ENCODE measurements at regions of chr9 and their contacts with region 1.

Region 1: DNA sequence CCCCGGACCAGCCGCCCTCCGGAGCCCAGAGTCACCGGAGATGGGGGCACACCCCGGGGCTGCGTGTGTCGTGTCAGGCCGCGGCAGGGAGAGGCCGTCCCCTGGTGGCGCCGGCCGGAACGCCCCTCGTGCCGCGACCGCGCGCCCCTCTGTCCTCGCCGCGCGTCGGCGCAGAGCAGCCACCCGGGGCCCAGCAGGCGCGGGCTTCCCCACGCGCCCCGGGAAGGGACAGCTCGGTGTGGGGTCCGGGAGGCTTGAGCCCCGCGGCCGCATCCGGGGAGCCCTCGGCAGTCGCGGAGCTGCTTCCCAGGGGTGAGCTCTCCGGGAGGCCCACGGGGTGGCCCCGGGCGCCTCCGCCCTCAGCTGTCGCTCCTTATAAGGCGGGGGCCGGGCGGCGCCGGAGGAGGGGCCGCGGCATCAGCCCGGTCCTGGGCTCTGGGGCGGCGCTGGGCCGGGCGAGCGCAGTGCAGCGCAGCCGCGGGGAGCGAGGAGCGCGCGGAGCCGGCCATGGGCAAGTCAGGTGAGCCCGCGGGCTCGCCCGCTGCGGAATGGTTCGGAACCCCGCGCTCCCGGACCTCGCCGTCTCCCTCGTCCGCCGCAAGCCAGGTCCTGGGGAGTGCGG is at the start of gene GLIPR2:
- DNase-seq: peak; percentile 81
- H3K4me3 Mint-ChIP-seq: peak within 1 kb of the TSS; percentile 93
- H3K27ac Mint-ChIP-seq: peak within 1 kb of the TSS; percentile 83
- H3K4me1 Mint-ChIP-seq: peaks cover 50% of the 10 kb centered on the region
- H3K27me3 Mint-ChIP-seq: peaks cover 20% of the 10 kb centered on the region
- total RNA-seq, gene GLIPR2: 26.3 and 27.5 TPM in 2 replicates

Region 2: GRCh38 chr9:36102742-36103495 is 33.5 kb before region 1 on chr9:
- intact Hi-C with region 1: loop called (anchors 1 kb)
- DNase-seq: peak; percentile 75
- H3K4me3 Mint-ChIP-seq: no peak overlapping the region
- H3K27ac Mint-ChIP-seq: no peak overlapping the region
- H3K4me1 Mint-ChIP-seq: peaks cover 8% of the 10 kb centered on the region
- H3K27me3 Mint-ChIP-seq: peaks cover 2% of the 10 kb centered on the region

Region 3: DNA sequence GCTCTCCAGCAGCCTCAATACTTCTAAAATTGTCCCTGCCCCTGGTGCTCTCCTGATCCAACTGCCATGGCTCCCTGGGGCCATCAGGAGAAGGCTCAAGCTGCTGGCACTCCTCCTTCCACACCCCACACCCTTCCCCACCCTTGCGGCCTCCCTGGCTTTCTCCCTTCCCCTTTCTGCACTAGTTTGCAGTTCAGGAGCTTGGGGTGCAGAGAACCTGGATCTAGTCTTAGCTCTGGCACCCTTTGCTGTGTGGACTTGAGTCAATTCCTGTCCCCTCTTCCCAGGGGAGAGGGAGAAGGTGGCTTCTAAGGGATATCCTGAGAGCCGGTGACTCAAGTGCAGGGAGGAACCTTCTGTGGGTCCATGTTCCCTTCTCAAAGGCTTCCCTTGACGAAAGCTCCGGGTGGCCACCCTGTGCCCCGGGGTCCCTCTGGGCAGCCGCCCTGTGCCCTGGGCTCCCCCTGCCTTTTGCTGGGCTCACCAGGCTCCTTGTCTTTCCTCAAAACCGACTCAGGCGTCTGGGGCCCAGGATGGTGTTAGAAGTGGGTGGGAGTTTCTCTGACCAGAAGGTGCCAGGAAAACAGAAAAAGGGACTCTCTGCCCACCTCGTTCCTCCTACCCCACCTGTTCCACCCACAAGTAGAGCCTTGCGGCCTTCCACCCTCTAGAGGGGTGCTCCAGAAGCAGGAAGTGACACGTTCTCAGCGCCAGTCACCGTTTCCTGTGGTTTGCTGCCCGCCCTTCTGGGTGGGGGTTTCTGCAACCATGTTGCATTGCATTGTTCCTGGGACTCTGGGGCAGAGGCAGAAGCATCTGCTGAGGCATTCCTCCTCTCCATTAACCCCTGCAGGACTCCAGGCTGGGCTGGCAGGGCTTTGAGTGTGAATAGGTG is 15.2 kb after region 1 on chr9:
- intact Hi-C with region 1: loop called (anchors 1 kb)
- DNase-seq: peak; percentile 84
- H3K4me3 Mint-ChIP-seq: peak overlapping the region; percentile 77
- H3K27ac Mint-ChIP-seq: peak overlapping the region; percentile 96
- H3K4me1 Mint-ChIP-seq: peaks cover 64% of the 10 kb centered on the region
- H3K27me3 Mint-ChIP-seq: no peaks in the 10 kb centered on the region

Measured in activated T-helper 1 cell treated with anti-CD3 and anti-CD28 coated beads, Interleukin-12 subunit alpha, Interleukin-12 subunit beta, Interleukin-2, Interleukin-4 antibody, amounts not matched to agents 30 ng/mL and 10 ng/mL and 1 ng/mL, durations not matched to agents 14 hours and 24 hours and 36 hours (primary cell).